GM18951 (cell line): ENCODE measurements at regions of chr1 and their contacts with region 1.

Region 1: GRCh38 chr1:38274974-38275373 is 228.4 kb upstream of the POU3F1 start:
- POLR2A ChIP-seq: no peak

Region 2: DNA sequence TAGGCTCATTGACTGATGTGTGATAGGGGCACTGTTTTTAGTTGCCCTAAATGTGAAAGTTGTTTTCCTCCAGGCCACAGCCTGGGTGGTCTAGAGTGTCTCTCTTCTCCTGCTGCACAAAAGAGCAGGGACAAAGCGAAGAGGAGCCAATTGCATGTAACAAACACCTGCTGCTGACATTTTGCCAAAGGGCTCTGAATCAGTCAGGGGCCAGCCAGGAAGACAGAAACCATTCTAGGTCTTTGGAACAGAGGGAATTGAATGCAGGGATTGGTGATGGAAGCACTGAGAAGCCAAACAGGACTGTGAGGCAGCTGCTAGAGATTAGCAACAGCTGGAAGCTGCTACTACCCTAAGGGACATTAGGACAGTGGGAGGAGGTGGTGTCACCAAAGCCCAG is 43.0 kb before region 1 on chr1:
- in situ Hi-C with region 1: no loop called
- POLR2A ChIP-seq: no peak

Region 3: GRCh38 chr1:38598118-38598517 is 323.1 kb after region 1 on chr1:
- in situ Hi-C with region 1: loop called (anchors 10 kb)
- POLR2A ChIP-seq: no peak